ENCODE measurements at regions of chr4 and their contacts with region 1.

Region 1: DNA sequence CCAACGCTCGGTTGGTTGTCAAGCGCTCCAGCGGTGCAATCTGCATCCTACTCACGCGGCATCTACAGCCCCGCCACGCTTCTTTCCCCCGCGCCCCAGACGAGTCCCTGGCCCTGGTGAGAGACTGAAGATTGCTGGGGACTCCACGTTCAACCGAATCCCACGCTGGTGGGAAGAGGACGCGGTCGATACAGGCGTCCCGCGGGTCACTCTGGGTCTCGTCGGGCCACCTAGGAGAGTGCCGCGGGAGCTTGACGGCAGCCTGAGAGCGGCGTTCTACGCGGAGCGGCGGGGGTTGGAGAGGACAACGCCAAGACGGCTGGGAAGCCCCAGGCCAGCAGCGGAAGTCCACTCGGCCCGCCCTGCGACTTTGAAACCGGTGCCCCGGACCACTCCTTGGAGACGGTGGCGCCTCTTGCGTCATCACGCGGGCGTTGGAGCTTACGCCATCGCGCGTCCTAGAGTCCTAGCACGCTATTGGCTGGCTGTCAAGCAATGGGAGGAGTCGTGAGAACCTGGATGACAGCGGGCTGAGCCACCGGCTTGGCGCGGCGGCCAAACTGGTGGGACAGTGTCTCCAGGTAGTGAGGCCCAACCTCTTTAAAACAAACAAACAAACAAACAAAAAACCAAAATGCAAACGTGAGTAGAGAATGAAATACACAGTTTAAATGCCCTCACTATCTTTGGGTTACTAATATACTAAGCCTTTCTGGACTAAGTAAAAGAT is at the start of gene SCLT1:
- DNase-seq: peak; percentile 98
- H3K4me3 Mint-ChIP-seq: peak within 1 kb of the TSS; percentile 53
- H3K27ac Mint-ChIP-seq: no peak within 1 kb of the TSS
- H3K4me1 Mint-ChIP-seq: peaks cover 33% of the 10 kb centered on the region
- H3K27me3 Mint-ChIP-seq: no peaks in the 10 kb centered on the region
- total RNA-seq, gene SCLT1: 20.8 to 20.9 TPM

Region 2: DNA sequence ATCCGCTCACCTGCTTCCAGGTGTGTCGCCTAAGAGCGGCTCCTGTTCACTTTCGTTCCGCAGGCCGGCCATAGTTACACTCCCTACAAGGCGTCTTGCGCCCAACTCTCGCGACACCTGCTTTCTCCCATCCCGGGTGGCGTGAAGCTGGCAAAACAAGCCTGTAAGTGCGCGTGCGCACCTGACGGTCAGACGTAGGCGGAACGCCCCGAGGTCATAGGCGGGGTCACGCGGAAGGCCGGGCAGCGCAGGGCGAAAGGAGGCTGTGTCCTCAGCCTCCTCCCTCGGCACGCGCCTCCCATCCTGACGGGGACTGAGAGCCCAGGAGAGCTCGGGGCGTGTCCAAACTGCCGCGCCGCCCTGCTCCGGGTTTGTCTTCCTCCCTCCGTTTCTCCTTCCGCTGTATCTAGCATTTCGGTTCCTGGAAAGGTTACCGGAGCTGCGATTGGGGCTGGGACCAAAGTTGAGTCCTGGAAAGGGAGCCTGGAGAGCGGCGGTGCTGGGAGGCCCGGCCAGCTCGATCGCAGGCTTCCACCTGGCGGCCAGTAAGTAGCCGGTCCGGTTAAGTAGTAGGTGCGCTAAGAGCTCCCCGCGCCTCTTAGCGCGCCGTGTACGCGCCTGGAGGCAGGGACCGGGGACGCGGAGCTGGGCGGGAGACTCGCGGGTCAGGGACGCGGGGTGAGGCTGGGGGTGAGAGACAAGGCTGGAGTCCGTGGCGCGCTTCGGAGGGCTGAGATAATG is 1128.1 kb before region 1 on chr4 and contains the starts of genes ABHD18 and MFSD8:
- CTCF ChIA-PET with region 1: no interaction called
- POLR2A ChIA-PET with region 1: no interaction called
- intact Hi-C with region 1: loop called (anchors 10 kb)
- DNase-seq: peak; percentile 100
- H3K4me3 Mint-ChIP-seq: peak within 1 kb of the TSS; percentile 94
- H3K27ac Mint-ChIP-seq: peak within 1 kb of the TSS; percentile 95
- H3K4me1 Mint-ChIP-seq: peaks cover 38% of the 10 kb centered on the region
- H3K27me3 Mint-ChIP-seq: no peaks in the 10 kb centered on the region
- total RNA-seq, gene ABHD18: 17.3 to 18.9 TPM
- total RNA-seq, gene MFSD8: 13.0 to 15.3 TPM

Region 3: GRCh38 chr4:128513664-128514484 is 579.5 kb before region 1 on chr4:
- CTCF ChIA-PET with region 1: no interaction called
- POLR2A ChIA-PET with region 1: no interaction called
- intact Hi-C with region 1: loop called (anchors 1 kb)
- DNase-seq: no peak
- H3K4me3 Mint-ChIP-seq: peak overlapping the region; percentile 55
- H3K27ac Mint-ChIP-seq: peak overlapping the region; percentile 38
- H3K4me1 Mint-ChIP-seq: peaks cover 16% of the 10 kb centered on the region
- H3K27me3 Mint-ChIP-seq: no peaks in the 10 kb centered on the region

Region 4: GRCh38 chr4:128863312-128864075 is 229.9 kb before region 1 on chr4:
- CTCF ChIA-PET with region 1: no interaction called
- POLR2A ChIA-PET with region 1: no interaction called
- intact Hi-C with region 1: loop called (anchors 2 kb)
- DNase-seq: peak; percentile 69
- H3K4me3 Mint-ChIP-seq: no peak overlapping the region
- H3K27ac Mint-ChIP-seq: peak overlapping the region; percentile 83
- H3K4me1 Mint-ChIP-seq: peaks cover 46% of the 10 kb centered on the region
- H3K27me3 Mint-ChIP-seq: no peaks in the 10 kb centered on the region

Measured in activated CD4-positive, alpha-beta memory T cell treated with anti-CD3 and anti-CD28 coated beads for 36 hours (primary cell).